Right cardiac atrium (tissue), 5 donors: ENCODE measurements at regions of chr2 and their contacts with region 1.

Region 1: GRCh38 chr2:28958689-28959088 is 22.4 kb upstream of the TOGARAM2 start:
- DNase-seq: peak; percentile 75 to 85 (median 77)
- ATAC-seq: peak; percentile 90 to 92
- H3K4me3 ChIP-seq: no peak overlapping the region
- H3K27ac ChIP-seq: no peak overlapping the region
- H3K4me1 ChIP-seq: no peaks in the 10 kb centered on the region
- H3K27me3 ChIP-seq: no peaks in the 10 kb centered on the region

Region 2: DNA sequence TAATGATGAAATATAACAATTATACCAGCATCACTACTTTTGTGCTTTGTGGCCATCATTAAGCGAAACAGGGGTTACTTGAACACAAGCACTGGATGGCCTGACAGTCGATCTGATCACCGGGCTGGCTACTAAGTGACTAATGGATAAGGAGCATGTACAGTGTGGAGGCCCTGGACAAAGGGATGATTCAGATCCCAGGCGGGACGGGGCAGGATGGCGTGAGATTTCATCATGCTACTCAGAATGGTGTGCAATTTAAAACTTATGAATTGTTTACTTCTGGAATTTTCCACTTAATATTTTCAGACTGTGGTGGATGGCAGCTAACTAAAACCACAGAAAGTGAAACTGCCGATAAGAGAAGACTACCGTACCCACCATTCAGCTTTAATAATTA is 149.5 kb after region 1 on chr2:
- intact Hi-C with region 1: no loop called
- DNase-seq: no peak
- ATAC-seq: peak in 1 of 2 donors; percentile 48
- H3K4me3 ChIP-seq: no peak overlapping the region
- H3K27ac ChIP-seq: no peak overlapping the region
- H3K4me1 ChIP-seq: no peaks in the 10 kb centered on the region
- H3K27me3 ChIP-seq: no peaks in the 10 kb centered on the region

Region 3: DNA sequence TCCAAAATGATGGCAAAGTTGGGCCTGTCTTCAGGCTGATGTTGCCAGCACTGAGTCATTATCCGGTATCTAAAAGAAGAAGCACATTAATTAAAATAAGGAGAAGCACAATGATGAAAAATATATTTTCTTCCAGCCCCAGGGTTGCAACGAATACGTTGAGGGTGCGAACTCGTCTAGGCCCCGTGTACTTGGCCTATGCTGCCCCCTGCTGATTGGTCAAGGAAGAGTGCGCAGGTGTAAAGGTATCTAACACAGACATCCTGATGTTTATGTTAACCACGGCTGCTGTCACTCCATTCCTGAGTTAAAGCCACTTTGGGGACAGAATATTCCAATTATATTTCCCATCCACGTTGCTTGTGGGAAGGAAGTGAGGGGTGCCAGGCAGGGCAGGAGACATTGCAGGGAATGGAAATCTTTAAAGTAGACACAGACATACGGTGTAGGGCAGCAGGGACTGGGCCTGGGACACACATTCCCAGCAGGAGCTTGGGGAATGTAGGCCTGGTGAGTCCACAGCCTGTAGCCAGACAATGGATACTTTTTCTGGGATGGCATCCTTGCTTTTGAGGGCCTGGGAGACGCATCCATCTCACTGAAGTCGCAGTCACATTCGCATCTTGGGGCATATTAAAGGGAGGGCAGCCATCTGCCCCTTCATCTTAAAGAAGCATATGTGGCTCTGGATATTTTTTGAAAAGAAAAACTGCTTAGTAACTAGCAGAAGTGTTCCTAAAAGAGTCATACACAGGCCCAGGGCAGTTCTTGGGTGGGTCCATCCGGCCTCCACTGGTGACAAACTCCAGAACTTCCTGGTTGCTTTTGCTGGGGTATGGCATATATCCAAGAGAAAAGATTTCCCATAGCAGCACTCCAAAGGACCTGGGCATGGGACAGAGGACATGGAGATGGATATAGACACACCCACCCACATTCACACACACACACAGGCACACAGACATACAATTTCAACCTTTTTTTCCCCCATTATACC is 238.4 kb after region 1 on chr2:
- intact Hi-C with region 1: loop called (anchors 1 to 5 kb)
- DNase-seq: peak; percentile 53 to 85 (median 75)
- ATAC-seq: peak; percentile 86 to 95
- H3K4me3 ChIP-seq: no peak overlapping the region
- H3K27ac ChIP-seq: no peak overlapping the region
- H3K4me1 ChIP-seq: no peaks in the 10 kb centered on the region
- H3K27me3 ChIP-seq: no peaks in the 10 kb centered on the region

Region 4: DNA sequence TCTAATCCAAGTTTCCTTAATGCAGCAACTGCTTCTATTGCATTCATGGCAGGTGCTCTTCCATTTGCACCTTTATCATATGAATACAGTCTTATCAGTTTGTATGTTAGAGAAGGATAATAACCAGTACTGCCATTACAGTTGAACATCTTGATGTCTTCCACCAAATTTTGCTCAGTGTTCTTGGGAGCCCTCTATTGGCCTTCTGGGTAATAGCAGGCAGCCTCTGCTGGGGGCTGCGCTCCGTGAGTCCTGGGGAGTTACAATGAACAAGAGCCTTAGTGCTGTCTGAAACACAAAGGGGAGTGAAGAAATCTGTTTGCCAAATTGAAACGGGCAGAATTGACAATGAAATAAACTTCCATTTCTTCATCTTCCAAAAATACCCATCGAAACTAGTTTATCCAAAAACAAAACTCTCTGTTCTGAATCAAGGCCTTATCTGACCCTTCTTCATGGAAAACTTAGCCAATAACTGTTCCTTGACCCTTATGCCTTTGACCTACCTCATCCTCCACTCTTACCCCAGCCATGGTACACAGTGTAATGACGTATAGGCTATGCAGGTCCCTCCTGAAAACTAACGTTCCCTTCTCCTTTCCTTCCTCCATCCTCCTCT is 882.8 kb after region 1 on chr2:
- intact Hi-C with region 1: loop called in 2 of 4 experiments (anchors 10 kb)
- DNase-seq: no peak
- ATAC-seq: peak in 1 of 2 donors; percentile 47
- H3K4me3 ChIP-seq: no peak overlapping the region
- H3K27ac ChIP-seq: no peak overlapping the region
- H3K4me1 ChIP-seq: no peaks in the 10 kb centered on the region
- H3K27me3 ChIP-seq: peaks cover 2% of the 10 kb centered on the region

Region 5: DNA sequence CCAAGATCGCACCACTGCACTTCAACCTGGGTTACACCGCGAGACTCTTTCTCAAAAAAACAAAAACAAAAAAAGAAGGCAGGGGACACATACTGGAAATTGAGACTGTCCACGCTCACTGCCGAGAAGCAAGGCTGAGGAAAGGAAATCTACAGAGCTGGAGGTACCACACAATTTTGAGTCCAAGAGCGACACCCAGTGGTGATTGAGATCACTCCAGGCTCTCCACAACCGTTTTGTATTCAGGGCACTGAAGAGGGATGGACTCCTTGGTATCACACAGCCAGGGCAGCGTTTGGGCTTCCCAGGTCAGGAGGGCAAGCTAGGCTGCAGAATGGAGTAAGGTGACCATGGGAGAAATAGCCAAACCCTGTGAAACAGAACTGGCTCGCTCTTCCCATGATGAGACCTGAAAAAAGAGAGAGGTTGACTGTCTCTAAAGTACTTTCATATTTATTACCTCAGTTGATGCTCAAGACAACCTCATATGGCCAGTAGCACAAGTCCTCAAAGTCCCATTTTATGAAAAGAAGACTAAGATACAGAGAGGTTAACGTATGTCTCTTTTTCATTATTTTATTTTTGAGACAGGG is 1113.7 kb after region 1 on chr2:
- intact Hi-C with region 1: loop called in 1 of 4 experiments (anchors 10 kb)
- DNase-seq: peak in 2 of 3 donors; percentile 48 to 76
- ATAC-seq: peak; percentile 82 to 90
- H3K4me3 ChIP-seq: no peak overlapping the region
- H3K27ac ChIP-seq: no peak overlapping the region
- H3K4me1 ChIP-seq: no peaks in the 10 kb centered on the region
- H3K27me3 ChIP-seq: no peaks in the 10 kb centered on the region